ENCODE measurements at regions of chr22 and their contacts with region 1.

Region 1: GRCh38 chr22:35627264-35628041 is 10.3 kb upstream of the MB start:
- DNase-seq: peak; percentile 87 to 90
- ATAC-seq: peak; percentile 78
- H3K4me3 ChIP-seq: peak overlapping the region in 1 of 2 donors; percentile 44
- H3K27ac ChIP-seq: peak overlapping the region in 1 of 2 donors; percentile 58
- H3K4me1 ChIP-seq: no peaks in the 10 kb centered on the region
- H3K27me3 ChIP-seq: no peaks in the 10 kb centered on the region

Region 2: DNA sequence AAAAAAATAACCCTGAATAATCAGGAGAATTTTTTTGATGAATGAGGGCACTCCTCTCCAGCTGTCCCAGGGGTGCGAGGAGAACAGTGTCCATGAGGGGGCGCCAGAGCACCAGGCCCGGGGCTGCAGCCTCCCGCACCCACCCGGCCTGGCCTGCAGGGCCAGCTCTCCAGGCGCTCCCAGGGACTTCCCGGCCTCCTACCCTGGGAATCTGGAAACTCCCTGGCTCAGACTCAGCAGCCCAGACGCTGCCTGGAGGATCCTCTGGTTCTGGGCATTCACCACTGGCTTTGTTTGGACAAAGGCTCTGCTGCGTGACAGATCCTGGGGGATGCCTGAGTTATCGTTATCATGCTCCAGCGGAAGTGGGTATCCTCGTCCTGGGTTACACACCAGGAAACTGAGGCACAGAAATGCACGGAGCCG is 196.5 kb before region 1 on chr22:
- intact Hi-C with region 1: loop called in 1 of 2 experiments (anchors 1 kb)
- DNase-seq: peak; percentile 94 to 97
- ATAC-seq: peak; percentile 95
- H3K4me3 ChIP-seq: no peak overlapping the region
- H3K27ac ChIP-seq: no peak overlapping the region
- H3K4me1 ChIP-seq: no peaks in the 10 kb centered on the region
- H3K27me3 ChIP-seq: no peaks in the 10 kb centered on the region

Region 3: DNA sequence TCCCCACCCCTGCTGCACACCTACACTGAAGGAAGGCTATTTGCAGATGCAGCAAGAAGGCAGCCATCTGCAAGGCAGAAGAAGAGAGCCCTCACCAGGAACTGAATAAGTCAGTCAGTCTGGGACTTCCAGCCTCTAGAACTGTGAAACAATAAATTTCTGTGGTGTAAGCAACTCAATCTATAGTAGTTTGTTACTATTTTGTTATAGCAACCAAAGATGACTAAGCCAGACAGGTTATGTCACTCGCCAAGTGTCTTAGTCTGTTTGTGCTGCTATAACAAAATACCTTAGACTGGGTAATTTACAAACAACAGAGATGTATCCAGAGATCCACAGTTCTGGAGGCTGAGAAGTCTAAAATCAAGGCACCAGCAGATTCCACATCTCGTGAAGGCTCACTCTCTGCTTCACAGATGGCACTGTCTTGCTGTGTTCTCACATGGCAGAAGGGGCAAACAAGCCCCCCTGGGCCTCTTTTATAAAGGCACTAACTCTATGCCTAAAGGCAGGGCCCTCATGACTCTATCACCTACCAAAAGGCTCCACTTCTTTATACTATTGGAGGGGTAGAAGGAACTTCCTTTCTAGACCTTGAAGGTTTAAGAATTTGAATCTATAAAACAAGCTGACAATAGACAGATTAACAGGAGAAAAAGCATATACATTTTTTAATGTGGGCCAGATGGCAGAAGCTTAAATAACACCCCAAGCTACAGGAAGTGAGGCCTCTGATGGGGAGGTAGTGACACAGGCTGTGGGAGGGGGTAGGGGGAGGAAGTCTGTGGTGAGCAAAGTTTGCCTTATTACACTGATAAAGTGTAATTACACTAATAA is 33.1 kb after region 1 on chr22:
- intact Hi-C with region 1: no loop called
- DNase-seq: no peak
- ATAC-seq: no peak
- H3K4me3 ChIP-seq: no peak overlapping the region
- H3K27ac ChIP-seq: no peak overlapping the region
- H3K4me1 ChIP-seq: no peaks in the 10 kb centered on the region
- H3K27me3 ChIP-seq: no peaks in the 10 kb centered on the region

Region 4: DNA sequence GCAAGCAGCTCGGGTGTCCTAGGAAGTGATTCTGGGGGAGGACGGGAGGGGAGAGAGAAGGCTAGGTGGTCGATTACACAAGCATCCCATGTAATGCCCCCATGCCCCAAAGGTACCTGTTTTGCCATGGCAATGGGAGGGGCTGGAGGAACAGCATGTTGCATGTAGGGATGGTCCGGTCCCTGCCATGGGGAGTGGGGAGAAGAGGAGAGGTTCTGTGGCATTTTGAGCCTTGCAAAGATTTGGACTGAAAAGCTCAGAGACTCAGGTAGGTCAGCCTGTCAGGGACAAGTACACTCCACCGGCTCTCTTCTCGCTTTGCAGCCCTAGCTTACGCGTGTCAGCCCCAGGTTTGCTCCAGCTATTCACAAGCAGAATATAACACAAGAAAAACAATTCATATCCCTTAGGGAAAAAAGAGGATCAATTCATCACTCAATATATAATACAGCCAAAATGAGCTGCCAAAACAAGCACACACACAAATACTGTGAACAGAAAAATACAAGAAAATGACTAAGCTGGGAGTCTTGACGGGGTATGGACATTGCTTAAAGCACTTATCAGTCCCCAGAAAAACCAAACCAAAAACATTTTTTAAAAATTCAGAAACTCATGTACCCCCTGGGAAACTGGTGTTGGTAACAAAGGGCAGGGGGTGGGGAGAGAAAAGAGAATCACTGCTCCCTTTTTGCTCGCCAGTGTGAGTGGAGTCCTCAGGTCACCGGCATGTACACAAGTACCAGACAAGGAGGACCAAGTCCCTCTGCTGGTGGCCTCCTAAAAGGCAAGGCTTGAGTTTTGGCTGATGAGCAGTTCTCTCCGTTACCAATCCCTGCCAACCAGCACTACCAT is 111.8 kb after region 1 on chr22:
- intact Hi-C with region 1: loop called in 1 of 2 experiments (anchors 2 kb)
- DNase-seq: no peak
- ATAC-seq: peak; percentile 70
- H3K4me3 ChIP-seq: no peak overlapping the region
- H3K27ac ChIP-seq: no peak overlapping the region
- H3K4me1 ChIP-seq: no peaks in the 10 kb centered on the region
- H3K27me3 ChIP-seq: no peaks in the 10 kb centered on the region

Region 5: GRCh38 chr22:35840302-35840739 is 212.9 kb after region 1 on chr22:
- intact Hi-C with region 1: loop called (anchors 5 to 10 kb)
- DNase-seq: peak; percentile 87 to 95
- ATAC-seq: peak; percentile 90
- H3K4me3 ChIP-seq: peak overlapping the region; percentile 70 to 81
- H3K27ac ChIP-seq: no peak overlapping the region
- H3K4me1 ChIP-seq: peaks cover 5 to 13% of the 10 kb centered on the region in 2 donors
- H3K27me3 ChIP-seq: no peaks in the 10 kb centered on the region

Region 6: DNA sequence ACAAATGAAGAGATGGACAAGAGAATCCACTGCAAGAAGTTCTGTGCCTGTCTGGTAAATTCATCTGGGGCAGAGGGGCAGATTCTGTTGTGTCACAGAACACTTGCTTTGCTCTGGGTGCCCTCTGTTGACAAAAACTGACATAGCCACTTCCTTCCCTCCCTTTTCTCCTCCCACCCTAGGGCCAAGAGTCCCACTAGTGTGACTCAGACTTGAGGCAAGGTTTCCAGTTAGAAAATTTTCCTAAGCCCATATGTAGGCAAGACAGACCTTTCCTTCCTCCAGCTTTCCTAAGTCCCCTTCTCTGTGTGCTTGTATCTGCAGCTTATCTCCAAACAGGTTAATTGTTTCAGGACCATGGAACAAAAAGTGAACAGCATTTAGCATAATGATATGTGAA is 294.3 kb after region 1 on chr22:
- intact Hi-C with region 1: loop called (anchors 2 to 5 kb)
- DNase-seq: peak in 1 of 2 donors; percentile 68
- ATAC-seq: peak; percentile 95
- H3K4me3 ChIP-seq: no peak overlapping the region
- H3K27ac ChIP-seq: peak overlapping the region; percentile 4 to 84
- H3K4me1 ChIP-seq: peaks cover 0 to 5% of the 10 kb centered on the region in 2 donors
- H3K27me3 ChIP-seq: no peaks in the 10 kb centered on the region

Region 7: GRCh38 chr22:36065775-36066559 is 438.5 kb after region 1 on chr22:
- intact Hi-C with region 1: loop called in 1 of 2 experiments (anchors 5 kb)
- DNase-seq: peak; percentile 96 to 97
- ATAC-seq: peak; percentile 97
- H3K4me3 ChIP-seq: peak overlapping the region; percentile 3 to 15
- H3K27ac ChIP-seq: peak overlapping the region; percentile 6 to 37
- H3K4me1 ChIP-seq: no peaks in the 10 kb centered on the region
- H3K27me3 ChIP-seq: no peaks in the 10 kb centered on the region

Region 8: DNA sequence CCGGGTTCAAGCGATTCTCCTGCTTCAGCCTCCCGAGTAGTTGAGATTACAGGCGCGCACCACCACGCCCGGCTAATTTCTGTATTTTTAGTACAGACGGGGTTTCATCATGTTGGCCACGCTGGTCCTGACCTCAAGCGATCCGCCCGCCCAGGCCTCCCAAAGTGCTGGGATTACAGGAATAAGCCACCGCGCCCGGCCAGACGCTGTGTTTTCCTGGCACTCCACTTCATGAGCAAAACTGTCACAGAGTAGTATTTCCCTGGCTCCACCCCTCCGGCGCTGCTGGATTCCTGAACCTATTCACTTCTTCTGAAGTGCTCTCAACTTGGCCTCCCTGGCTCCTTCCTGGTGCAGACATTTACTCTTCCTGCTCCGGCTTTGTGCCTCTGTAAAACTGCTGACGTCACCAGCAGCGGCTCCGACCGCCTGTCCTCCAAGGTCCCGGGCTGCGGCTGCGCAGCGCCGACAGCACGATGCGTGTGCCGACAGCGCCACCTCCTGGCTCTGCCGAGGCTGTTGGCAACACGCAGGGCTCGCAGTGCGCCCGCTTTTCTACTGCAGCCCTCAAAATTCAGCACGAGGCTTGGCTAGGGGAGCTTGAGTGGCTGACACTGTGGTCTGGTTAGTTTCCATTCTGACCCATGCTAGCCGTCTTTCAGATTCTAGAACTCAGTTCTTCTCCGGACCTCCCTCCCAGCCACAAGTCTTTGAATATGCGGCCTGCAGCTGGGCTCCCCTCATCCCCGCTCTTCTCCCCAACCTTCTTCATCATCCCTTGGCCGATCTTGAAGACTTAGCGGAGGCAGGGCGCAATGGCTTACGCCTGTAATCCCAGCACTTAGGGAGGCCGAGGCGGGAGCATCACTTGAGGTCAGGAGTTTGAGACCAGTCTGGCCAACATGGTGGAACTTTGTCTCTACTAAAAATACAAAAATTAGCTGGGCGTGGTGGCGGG is 496.5 kb after region 1 on chr22:
- intact Hi-C with region 1: loop called in 1 of 2 experiments (anchors 5 kb)
- DNase-seq: peak; percentile 97 to 98
- ATAC-seq: peak; percentile 98
- H3K4me3 ChIP-seq: no peak overlapping the region
- H3K27ac ChIP-seq: peak overlapping the region in 1 of 2 donors; percentile 73
- H3K4me1 ChIP-seq: no peaks in the 10 kb centered on the region
- H3K27me3 ChIP-seq: no peaks in the 10 kb centered on the region

Measured in aorta (tissue), 5 donors.